ENCODE measurements at regions of chr9 and their contacts with region 1.

Region 1: DNA sequence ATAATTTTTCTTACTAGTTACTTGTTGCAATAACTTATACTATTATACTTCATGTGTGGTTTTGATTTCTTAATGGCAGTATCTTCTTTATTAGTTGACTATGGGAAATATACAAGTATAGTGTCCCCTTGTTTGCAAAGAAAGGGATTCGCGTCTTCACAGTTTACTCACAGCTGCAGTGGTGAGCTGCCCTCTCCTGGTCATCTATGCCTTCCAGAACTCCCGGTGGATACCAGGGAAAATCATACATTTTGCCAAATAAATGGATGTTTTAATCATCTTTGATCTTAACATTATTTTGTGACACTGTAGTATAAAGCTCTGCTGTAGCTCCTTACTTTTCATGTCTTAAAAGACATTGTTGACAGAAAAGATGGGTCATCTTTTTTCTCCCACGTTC is 142.0 kb downstream of the ZCCHC7 start:
- DNase-seq: no peak
- H3K4me3 ChIP-seq: no peak overlapping the region
- H3K27ac ChIP-seq: no peak overlapping the region
- H3K4me1 ChIP-seq: no peaks in the 10 kb centered on the region
- H3K27me3 ChIP-seq: no peaks in the 10 kb centered on the region
- CTCF ChIP-seq: no peak

Region 2: DNA sequence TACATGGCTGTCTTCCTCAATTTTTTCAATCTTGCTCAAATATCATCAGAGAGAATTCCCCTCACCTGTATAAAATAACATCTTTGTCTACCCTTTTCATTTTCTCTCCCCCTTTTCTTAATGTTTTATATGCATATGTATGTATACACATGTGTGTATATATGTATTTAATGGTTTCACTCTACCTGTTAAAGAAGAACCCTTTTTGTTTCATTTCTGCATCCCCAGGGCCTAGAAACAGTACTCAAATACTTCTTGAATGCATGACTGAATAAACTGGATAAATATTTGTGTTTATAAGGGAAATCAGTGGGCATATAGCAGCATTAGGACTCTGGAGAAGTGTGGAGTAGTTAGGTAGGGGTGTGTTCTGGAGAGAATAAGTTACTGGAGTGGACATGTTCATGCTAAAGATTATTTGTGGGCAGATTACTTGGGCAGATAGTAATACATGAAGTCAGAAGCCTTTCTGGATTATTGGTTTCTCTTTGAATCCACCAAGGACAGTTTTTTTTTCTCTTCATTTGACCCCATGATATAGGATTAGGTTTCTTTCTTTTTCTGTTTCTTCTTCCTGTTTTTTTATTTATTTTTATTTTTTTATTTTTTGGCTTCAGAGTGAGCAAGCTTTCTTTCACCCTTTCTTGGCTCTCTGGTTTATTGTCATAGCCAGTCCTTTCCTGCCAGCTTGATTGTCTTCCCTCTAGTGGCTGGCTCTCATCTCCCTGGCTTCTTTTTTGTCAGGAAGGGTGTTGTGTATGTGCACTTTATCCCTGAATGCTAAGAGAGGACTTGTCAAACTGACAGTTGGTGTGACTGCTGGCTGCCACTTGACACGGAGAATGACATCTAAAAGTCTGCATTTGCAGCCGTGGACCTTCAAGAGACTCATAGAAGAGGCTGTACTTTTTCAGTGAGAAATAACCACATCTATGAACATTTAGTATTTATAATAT is 52.7 kb before region 1 on chr9:
- intact Hi-C with region 1: loop called (anchors 10 kb)
- DNase-seq: no peak
- H3K4me3 ChIP-seq: no peak overlapping the region
- H3K27ac ChIP-seq: no peak overlapping the region
- H3K4me1 ChIP-seq: no peaks in the 10 kb centered on the region
- H3K27me3 ChIP-seq: no peaks in the 10 kb centered on the region
- CTCF ChIP-seq: no peak